HepG2 (cell line): ENCODE measurements at regions of chr11 and their contacts with region 1.

Region 1: GRCh38 chr11:8033305-8034105 is 46.4 kb downstream of the EIF3F start:
- DNase-seq: peak; percentile 40
- ATAC-seq: peak; percentile 88
- H3K4me3 ChIP-seq: no peak overlapping the region
- H3K27ac ChIP-seq: no peak overlapping the region
- H3K4me1 ChIP-seq: no peaks in the 10 kb centered on the region
- H3K27me3 ChIP-seq: peaks cover 0 to 38% of the 10 kb centered on the region in 2 experiments; a peak in 4 of 5 replicates
- CTCF ChIP-seq: peak; percentile 91
- EP300 ChIP-seq: no peak
- POLR2A ChIP-seq: no peak
- RAD21 ChIP-seq: peak; percentile 81

Region 2: GRCh38 chr11:7536100-7536499 is 497.4 kb before region 1 on chr11:
- CTCF ChIA-PET with region 1: no interaction called
- POLR2A ChIA-PET with region 1: no interaction called
- in situ Hi-C with region 1: no loop called
- intact Hi-C with region 1: no loop called
- DNase-seq: no peak
- ATAC-seq: peak; percentile 92
- H3K4me3 ChIP-seq: no peak overlapping the region
- H3K27ac ChIP-seq: no peak overlapping the region
- H3K4me1 ChIP-seq: peaks cover 32% of the 10 kb centered on the region
- H3K27me3 ChIP-seq: no peaks in the 10 kb centered on the region; a peak in 1 of 5 replicates
- CTCF ChIP-seq: peak; percentile 61
- EP300 ChIP-seq: no peak
- POLR2A ChIP-seq: no peak
- RAD21 ChIP-seq: no peak

Region 3: GRCh38 chr11:8070417-8071115 is 37.1 kb after region 1 on chr11:
- CTCF ChIA-PET with region 1: interaction called, 12 read pairs
- POLR2A ChIA-PET with region 1: no interaction called
- in situ Hi-C with region 1: no loop called
- intact Hi-C with region 1: loop called (anchors 1 kb)
- DNase-seq: peak; percentile 20
- ATAC-seq: peak; percentile 60
- H3K4me3 ChIP-seq: no peak overlapping the region
- H3K27ac ChIP-seq: no peak overlapping the region
- H3K4me1 ChIP-seq: peaks cover 14% of the 10 kb centered on the region
- H3K27me3 ChIP-seq: peaks cover 0 to 36% of the 10 kb centered on the region in 2 experiments; a peak in 4 of 5 replicates
- CTCF ChIP-seq: peak; percentile 29
- EP300 ChIP-seq: no peak
- POLR2A ChIP-seq: no peak
- RAD21 ChIP-seq: no peak

Region 4: DNA sequence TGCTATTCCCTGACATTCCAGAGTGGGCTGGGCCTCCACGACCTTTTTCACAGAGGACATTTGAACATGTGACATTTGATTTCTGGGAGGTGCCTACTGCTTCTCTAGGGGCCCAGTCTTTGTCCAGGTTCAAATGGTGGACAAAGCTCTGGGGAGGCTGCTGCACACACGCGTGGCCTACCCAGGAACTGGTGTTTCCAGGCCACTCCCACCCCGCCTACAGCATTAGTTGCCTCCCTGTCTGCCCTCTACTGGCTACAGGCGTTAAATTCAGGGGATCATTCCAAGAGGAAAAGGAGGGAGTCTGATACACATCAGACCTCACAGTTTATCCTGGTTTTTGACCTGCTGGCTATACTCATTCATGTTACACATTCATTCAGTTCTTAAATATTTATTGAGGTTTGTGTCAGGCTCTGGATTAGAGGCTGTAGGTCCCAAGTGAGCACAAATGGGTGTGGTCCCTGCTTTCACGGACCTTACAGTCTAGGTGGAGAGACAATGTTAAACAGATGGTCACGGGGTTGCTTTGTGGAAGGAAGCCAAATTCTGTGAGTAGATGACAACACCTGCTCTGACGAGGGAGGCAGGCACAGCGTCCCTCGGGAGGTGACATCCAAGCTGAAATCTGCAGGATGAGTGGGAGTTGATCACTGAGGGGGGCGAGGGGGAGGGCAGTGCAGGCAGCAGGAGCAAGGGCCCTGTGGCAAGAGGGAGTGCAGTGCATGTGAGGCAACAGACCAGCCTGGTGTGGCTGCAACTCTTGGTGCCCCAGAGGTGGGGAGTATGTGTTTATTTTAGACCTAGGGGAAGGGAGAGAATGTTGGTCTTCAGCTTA is 59.3 kb after region 1 on chr11:
- CTCF ChIA-PET with region 1: interaction called, 7 read pairs
- POLR2A ChIA-PET with region 1: no interaction called
- in situ Hi-C with region 1: loop called (anchors 5 kb)
- intact Hi-C with region 1: loop called (anchors 1 kb)
- DNase-seq: peak; percentile 58
- ATAC-seq: peak; percentile 84
- H3K4me3 ChIP-seq: no peak overlapping the region
- H3K27ac ChIP-seq: no peak overlapping the region
- H3K4me1 ChIP-seq: no peaks in the 10 kb centered on the region
- H3K27me3 ChIP-seq: no peaks in the 10 kb centered on the region
- CTCF ChIP-seq: peak; percentile 61
- EP300 ChIP-seq: no peak
- POLR2A ChIP-seq: no peak
- RAD21 ChIP-seq: peak; percentile 37; the same call in 1 of the 2 replicates

Region 5: DNA sequence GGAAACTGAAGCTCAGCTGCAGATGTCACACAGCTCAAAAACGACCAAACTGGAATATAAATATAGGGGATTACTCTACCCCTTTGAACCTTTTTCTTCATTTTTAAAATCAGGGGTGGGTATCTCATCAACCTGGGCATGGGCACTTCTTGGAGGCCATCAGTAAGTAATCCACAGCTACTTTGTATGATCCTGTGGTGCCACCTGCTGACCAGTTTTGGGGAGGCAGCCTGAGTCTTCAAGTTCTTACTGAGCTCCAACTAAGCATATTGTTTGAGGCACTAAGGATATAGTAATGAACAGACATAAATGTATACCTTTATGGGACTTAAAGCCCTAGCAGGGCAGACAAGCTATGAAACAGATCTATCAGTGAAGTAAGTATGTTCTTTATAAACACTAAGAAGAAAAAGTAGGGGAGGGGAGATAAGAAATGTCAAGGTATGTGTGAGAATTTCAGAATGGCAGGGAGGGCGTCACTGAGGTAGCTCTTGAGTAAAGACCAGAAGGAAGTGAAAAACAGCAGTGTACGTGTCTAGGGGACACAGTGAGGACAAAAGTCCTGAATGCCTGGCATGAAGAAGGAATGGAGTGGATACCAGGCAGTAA is 65.9 kb after region 1 on chr11:
- CTCF ChIA-PET with region 1: interaction called, 25 read pairs
- POLR2A ChIA-PET with region 1: no interaction called
- in situ Hi-C with region 1: loop called (anchors 5 kb)
- intact Hi-C with region 1: loop called (anchors 1 kb)
- DNase-seq: peak; percentile 48
- ATAC-seq: peak; percentile 80
- H3K4me3 ChIP-seq: no peak overlapping the region
- H3K27ac ChIP-seq: no peak overlapping the region
- H3K4me1 ChIP-seq: no peaks in the 10 kb centered on the region
- H3K27me3 ChIP-seq: no peaks in the 10 kb centered on the region
- CTCF ChIP-seq: peak; percentile 80
- EP300 ChIP-seq: no peak
- POLR2A ChIP-seq: no peak
- RAD21 ChIP-seq: peak; percentile 68